SK-N-SH (cell line): ENCODE measurements at regions of chr12 and their contacts with region 1.

Region 1: GRCh38 chr12:53984901-53985709 is at the start of gene HOXC10:
- DNase-seq: peak; percentile 97
- H3K4me3 ChIP-seq: peak within 1 kb of the TSS; percentile 41 to 52; a peak in 3 of 4 replicates
- H3K27ac ChIP-seq: no peak within 1 kb of the TSS
- H3K4me1 ChIP-seq: peaks cover 0 to 12% of the 10 kb centered on the region in 2 experiments; a peak in 1 of 4 replicates
- H3K27me3 ChIP-seq: peaks cover 95% of the 10 kb centered on the region
- CTCF ChIP-seq: peak; percentile 80
- EP300 ChIP-seq: no peak
- RAD21 ChIP-seq: peak; percentile 88
- polyA plus RNA-seq, gene HOXC10: 0.03 and 0.08 TPM in 2 replicates

Region 2: DNA sequence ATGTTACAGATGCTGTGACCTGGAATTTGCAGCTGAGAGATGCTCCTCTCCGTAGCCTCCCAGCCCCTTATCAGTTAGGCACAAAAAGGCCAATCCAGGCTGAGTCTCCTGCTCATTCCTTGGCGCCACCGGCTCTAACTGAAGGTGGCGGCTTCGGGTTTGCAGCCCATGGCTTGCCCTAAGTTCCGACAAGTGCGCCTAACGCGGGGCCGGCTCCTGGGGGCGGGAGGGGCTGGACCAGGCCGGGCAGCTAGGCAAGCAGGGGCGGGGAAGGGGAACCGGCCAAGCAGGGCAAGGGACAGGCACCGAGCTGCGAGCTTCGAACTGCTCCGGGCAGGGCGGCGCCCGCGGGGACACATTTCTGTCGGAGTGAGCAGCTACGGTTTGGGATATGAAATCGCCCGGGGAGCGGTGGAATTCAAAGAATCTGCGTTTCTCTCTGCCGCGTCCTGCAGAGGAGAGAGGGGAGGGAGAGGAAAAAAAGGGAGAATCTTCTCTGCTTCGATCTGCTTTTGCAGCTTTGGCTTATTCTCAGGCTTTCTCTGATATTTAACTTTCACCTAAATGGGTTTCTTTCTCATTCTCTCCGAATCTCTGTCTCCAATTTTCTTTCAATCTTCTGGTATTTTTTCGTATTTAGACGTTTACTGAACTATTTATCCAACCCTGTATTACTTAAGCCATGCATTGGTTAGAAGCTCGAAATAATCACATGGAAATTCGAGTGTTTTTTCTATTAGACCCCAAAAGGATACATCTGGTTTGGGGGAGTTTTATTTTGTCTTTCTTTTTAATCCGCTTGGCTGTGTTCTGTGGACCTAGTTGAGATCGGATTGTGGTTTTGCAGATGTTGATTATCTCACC is 32.0 kb before region 1 on chr12:
- CTCF ChIA-PET with region 1: interaction called, 10 read pairs
- POLR2A ChIA-PET with region 1: no interaction called
- DNase-seq: no peak
- H3K4me3 ChIP-seq: no peak overlapping the region
- H3K27ac ChIP-seq: no peak overlapping the region
- H3K4me1 ChIP-seq: no peaks in the 10 kb centered on the region; a peak in 1 of 4 replicates
- H3K27me3 ChIP-seq: peaks cover 100% of the 10 kb centered on the region
- CTCF ChIP-seq: no peak
- EP300 ChIP-seq: no peak
- RAD21 ChIP-seq: no peak

Region 3: DNA sequence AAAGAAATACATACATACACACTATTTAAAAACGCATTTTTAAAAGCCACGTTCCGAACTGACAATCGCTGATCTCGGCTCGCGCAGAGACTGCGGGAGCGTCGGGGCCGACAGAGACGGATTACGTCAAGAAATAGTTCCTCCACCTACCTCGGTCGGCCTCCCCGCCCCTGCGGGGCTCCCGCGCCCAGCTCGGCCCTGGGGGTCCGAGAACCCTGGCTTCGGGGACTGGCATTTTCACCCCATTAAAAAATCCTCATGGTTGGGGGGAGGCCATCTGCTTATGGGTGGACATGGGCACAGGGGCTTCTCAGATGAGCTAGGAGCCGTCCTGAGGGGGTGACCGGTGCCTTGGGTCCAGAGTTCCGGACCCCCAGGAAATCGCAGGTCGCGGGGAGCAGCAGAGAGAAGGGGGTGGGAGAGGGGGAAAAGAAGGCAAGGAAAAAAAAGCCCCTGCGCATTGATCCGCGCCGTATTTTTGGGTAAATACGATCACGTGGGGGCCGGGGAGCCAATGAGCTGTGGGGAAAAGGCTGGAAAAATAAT is 14.5 kb after region 1 on chr12:
- CTCF ChIA-PET with region 1: interaction called, 188 read pairs
- POLR2A ChIA-PET with region 1: interaction called, 5 read pairs
- DNase-seq: peak; percentile 88
- H3K4me3 ChIP-seq: peak overlapping the region; percentile 76 to 80
- H3K27ac ChIP-seq: peak overlapping the region in 1 of 2 experiments; percentile 78; a peak in 2 of 4 replicates
- H3K4me1 ChIP-seq: peaks cover 0 to 19% of the 10 kb centered on the region in 2 experiments; a peak in 2 of 4 replicates
- H3K27me3 ChIP-seq: peaks cover 29% of the 10 kb centered on the region
- CTCF ChIP-seq: no peak
- EP300 ChIP-seq: no peak
- RAD21 ChIP-seq: no peak

Region 4: GRCh38 chr12:54017878-54018467 is 32.9 kb after region 1 on chr12:
- CTCF ChIA-PET with region 1: interaction called, 10 read pairs
- POLR2A ChIA-PET with region 1: no interaction called
- DNase-seq: peak; percentile 99
- H3K4me3 ChIP-seq: peak overlapping the region; percentile 69 to 85
- H3K27ac ChIP-seq: peak overlapping the region; percentile 89 to 99
- H3K4me1 ChIP-seq: peaks cover 7 to 36% of the 10 kb centered on the region in 2 experiments; a peak in 2 of 4 replicates
- H3K27me3 ChIP-seq: no peaks in the 10 kb centered on the region
- CTCF ChIP-seq: no peak
- EP300 ChIP-seq: peak in 1 of 2 experiments; percentile 30; a peak in 1 of 4 replicates
- RAD21 ChIP-seq: no peak

Region 5: DNA sequence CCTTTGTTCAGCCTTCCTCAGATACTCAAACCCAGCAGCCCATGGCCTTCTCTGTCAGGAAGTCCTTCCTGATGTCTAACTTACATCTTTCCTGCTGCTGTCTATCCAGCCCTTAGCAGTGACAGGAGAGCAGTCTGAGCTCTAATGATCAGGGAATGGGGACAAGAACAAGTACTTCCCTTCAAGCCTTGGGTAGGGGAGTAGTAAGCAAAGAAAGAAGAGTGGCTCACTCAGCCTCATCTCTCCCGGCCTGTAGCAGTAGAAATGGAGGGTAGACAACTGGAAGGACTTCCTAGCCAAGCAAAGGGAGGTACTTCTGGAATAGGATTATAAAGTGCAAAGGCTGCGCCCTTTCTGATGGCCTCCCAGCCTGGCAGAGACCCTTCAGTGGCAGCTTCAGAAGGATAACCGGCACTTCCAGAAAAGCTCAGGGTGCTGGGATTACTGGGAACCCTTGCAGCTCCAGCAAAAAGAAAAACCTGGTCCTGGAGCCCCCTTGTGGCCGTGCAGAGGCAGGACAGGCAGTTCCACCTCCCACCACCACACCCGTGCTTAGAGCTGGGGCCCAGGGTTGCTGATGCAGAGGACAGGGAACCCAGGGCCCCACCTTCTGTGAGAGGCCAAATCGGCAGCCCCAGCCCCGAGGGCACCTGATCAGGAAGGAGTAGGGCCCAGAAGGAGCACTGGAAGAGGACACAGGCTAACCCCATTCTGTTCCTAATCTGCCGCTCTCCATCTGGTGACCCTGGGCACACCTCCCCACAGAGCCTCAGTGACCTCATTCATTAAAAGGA is 216.1 kb after region 1 on chr12:
- CTCF ChIA-PET with region 1: interaction called, 194 read pairs
- POLR2A ChIA-PET with region 1: no interaction called
- DNase-seq: peak; percentile 88
- H3K4me3 ChIP-seq: peak overlapping the region in 1 of 2 experiments; percentile 16; a peak in 1 of 4 replicates
- H3K27ac ChIP-seq: no peak overlapping the region
- H3K4me1 ChIP-seq: peaks cover 5 to 13% of the 10 kb centered on the region in 2 experiments; a peak in 2 of 4 replicates
- H3K27me3 ChIP-seq: peaks cover 16% of the 10 kb centered on the region; the same call in 1 of the 2 replicates
- CTCF ChIP-seq: peak; percentile 92
- EP300 ChIP-seq: no peak
- RAD21 ChIP-seq: peak; percentile 85